ENCODE measurements at regions of chr1 and their contacts with region 1.

Region 1: DNA sequence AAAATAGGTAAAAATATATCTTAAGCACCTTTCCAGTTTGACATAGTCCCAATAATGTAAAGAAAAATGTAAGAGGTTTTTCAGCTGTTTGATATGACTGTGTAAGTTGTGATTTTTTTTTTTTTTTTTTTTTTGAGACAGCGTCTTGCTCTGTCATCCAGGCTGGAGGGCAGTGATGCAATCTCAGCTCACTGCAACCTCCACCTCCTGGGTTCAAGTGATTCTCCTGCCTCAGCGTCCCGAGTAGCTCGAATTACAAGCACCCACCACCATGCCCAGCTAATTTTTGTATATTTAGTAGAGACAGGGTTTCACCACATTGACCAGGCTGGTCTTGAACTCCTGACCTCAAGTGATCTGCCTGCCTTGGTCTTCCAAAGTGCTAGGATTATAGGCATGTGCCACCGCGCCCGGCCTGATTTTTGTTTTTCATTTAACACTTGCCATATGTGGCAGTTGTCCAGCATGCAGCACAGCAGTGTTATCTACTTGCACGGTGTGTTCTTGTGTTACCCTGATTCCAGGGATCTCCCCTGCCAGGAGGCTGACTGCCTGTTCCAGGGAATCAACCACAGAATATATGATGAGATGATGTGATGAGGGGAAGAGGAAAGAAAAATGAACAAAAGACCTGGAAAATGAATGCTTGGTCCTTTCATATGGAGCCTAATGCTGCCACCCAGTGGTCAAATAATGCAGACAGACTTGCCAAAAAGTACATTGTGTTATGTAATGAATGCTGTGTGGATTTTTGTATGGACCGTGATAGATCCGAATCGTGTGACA is 79.0 kb downstream of the RAVER2 start:
- DNase-seq: peak; percentile 64
- H3K4me3 Mint-ChIP-seq: no peak overlapping the region
- H3K27ac Mint-ChIP-seq: no peak overlapping the region
- H3K4me1 Mint-ChIP-seq: peaks cover 29% of the 10 kb centered on the region
- H3K27me3 Mint-ChIP-seq: no peaks in the 10 kb centered on the region

Region 2: GRCh38 chr1:64268653-64269557 is 555.0 kb before region 1 on chr1:
- CTCF ChIA-PET with region 1: interaction called, 22 read pairs
- POLR2A ChIA-PET with region 1: no interaction called
- intact Hi-C with region 1: loop called (anchors 1 kb)
- DNase-seq: peak; percentile 62
- H3K4me3 Mint-ChIP-seq: no peak overlapping the region
- H3K27ac Mint-ChIP-seq: no peak overlapping the region
- H3K4me1 Mint-ChIP-seq: peaks cover 2% of the 10 kb centered on the region
- H3K27me3 Mint-ChIP-seq: peaks cover 18% of the 10 kb centered on the region

Region 3: GRCh38 chr1:64686828-64687724 is 136.8 kb before region 1 on chr1:
- CTCF ChIA-PET with region 1: interaction called, 22 read pairs
- POLR2A ChIA-PET with region 1: no interaction called
- intact Hi-C with region 1: loop called (anchors 1 kb)
- DNase-seq: peak; percentile 35
- H3K4me3 Mint-ChIP-seq: no peak overlapping the region
- H3K27ac Mint-ChIP-seq: no peak overlapping the region
- H3K4me1 Mint-ChIP-seq: peaks cover 6% of the 10 kb centered on the region
- H3K27me3 Mint-ChIP-seq: no peaks in the 10 kb centered on the region

Region 4: DNA sequence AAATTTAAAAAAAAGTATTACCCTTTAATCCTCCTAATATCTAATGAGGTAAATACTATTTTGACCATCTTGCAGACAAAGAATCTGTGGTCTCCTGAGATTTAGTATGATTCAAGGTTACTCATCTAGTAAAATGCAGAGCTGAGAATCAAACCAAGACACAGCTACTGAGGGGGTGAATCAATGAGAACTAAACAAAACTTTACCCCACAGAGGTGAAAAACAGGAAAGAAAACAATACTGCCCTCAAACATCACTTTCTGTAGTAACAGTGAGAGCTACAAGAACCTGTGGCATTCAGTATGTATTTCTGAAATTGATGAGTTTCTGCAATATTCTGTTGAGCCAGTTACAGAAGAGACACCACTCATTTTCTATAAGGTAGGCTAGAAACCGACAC is 57.4 kb after region 1 on chr1:
- CTCF ChIA-PET with region 1: no interaction called
- POLR2A ChIA-PET with region 1: no interaction called
- intact Hi-C with region 1: loop called (anchors 2 kb)
- DNase-seq: no peak
- H3K4me3 Mint-ChIP-seq: no peak overlapping the region
- H3K27ac Mint-ChIP-seq: no peak overlapping the region
- H3K4me1 Mint-ChIP-seq: peaks cover 68% of the 10 kb centered on the region
- H3K27me3 Mint-ChIP-seq: no peaks in the 10 kb centered on the region

Region 5: GRCh38 chr1:65002508-65003315 is 178.8 kb after region 1 on chr1:
- CTCF ChIA-PET with region 1: no interaction called
- POLR2A ChIA-PET with region 1: no interaction called
- intact Hi-C with region 1: loop called (anchors 5 kb)
- DNase-seq: peak; percentile 82
- H3K4me3 Mint-ChIP-seq: peak overlapping the region; percentile 76
- H3K27ac Mint-ChIP-seq: peak overlapping the region; percentile 84
- H3K4me1 Mint-ChIP-seq: peaks cover 23% of the 10 kb centered on the region
- H3K27me3 Mint-ChIP-seq: no peaks in the 10 kb centered on the region

Region 6: DNA sequence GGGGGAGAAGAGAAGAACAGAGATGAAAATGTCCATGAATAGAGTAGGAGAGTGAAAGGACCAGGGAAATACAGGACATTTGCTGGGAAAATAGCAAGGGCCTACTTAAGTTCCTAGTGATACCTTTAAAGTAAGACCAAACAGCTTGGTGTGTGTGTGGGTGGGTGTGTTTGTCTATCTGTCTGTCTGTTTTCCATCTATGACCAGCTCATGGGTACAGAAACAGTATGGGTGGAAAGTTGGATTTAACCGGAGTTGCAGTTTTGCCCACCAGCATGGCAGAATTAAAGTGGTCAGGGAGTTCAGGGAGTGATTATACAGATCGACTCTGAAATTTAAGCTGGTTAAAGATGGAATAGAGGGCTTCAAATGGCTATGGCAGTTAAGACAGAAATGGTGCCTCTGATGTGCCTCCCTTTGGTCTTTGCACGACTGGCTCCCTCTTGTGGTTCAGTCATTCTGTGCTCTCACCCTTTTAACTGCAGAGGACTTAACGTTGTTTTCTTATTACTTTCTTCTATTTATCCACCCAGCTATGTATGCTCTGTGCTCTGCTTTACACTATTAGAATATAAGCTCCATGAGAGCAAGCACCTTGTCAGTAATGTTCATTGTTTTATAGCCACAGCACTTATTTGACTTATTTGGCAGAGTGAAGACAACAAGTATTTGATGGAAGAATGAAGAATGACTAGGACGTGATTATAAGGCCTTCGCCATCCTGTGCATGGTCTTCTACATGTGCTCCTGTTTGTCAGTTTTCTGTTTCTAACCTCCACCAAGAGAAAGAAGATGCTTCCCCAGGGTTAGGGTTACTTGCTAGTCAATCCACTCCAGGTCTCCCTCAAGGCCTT is 251.5 kb after region 1 on chr1:
- CTCF ChIA-PET with region 1: interaction called, 40 read pairs
- POLR2A ChIA-PET with region 1: no interaction called
- intact Hi-C with region 1: no loop called
- DNase-seq: peak; percentile 73
- H3K4me3 Mint-ChIP-seq: no peak overlapping the region
- H3K27ac Mint-ChIP-seq: no peak overlapping the region
- H3K4me1 Mint-ChIP-seq: peaks cover 14% of the 10 kb centered on the region
- H3K27me3 Mint-ChIP-seq: no peaks in the 10 kb centered on the region